Activated T-helper 2 cell treated with anti-CD3 and anti-CD28 coated beads, Interferon-gamma antibody, Interleukin-2, Interleukin-4, amounts not matched to agents 10 μg/mL and 5 μg/mL and 100 μg/mL, durations not matched to agents 14 hours and 24 hours and 36 hours (primary cell): ENCODE measurements at regions of chr10 and their contacts with region 1.

Region 1: GRCh38 chr10:100508691-100509150 is 10.9 kb downstream of the SEC31B start:
- DNase-seq: peak; percentile 58
- H3K4me3 Mint-ChIP-seq: peak overlapping the region; percentile 70
- H3K27ac Mint-ChIP-seq: peak overlapping the region; percentile 87
- H3K4me1 Mint-ChIP-seq: peaks cover 85% of the 10 kb centered on the region
- H3K27me3 Mint-ChIP-seq: no peaks in the 10 kb centered on the region

Region 2: DNA sequence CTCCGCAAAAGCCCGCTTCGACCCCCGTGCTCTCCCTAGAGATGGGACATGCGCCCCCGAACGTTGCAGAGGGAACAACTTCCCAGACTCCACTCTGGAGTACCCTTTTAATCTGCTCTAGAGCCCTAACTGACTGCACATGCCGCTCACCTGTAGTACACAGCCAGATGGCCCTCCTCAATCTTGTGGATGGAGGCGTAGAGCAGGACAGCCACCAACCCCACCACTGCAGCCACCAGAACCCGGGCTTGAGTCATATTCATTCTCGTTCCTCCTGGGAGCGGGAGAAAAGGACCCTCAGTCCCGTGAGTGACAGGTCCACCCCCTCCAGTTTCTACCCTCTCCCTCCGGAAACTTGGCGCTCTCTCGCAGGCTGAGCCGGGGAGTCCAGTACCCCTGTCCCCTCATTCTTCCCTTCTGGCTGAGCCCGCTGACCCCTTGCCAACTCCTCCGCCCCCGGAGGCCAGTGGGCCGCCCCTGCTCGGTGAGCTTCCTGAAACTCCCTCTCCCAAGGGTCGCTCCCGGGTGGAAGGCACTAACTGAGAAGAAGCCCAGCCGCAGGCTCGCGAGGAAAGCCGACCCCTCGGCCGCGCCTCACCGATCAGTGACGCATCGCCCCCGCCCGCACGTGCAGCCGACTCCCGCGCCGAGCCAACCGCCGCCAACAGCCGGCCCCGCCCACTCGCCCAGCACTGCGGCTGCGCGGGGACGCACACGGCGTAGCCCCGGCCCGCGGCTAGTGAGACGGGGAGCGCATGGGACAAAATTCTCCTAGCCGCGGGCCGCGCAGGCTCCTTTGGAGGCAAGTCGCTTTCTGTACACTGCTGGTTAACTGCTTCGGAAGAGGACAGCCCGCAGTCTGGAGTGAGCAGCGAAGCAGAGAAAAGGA is 323.1 kb before region 1 on chr10 and contains the start of gene ERLIN1:
- intact Hi-C with region 1: loop called (anchors 5 kb)
- DNase-seq: peak; percentile 90
- H3K4me3 Mint-ChIP-seq: peak within 1 kb of the TSS; percentile 99
- H3K27ac Mint-ChIP-seq: peak within 1 kb of the TSS; percentile 94
- H3K4me1 Mint-ChIP-seq: peaks cover 55% of the 10 kb centered on the region
- H3K27me3 Mint-ChIP-seq: no peaks in the 10 kb centered on the region
- total RNA-seq, gene ERLIN1: 18.2 and 19.4 TPM in 2 replicates

Region 3: DNA sequence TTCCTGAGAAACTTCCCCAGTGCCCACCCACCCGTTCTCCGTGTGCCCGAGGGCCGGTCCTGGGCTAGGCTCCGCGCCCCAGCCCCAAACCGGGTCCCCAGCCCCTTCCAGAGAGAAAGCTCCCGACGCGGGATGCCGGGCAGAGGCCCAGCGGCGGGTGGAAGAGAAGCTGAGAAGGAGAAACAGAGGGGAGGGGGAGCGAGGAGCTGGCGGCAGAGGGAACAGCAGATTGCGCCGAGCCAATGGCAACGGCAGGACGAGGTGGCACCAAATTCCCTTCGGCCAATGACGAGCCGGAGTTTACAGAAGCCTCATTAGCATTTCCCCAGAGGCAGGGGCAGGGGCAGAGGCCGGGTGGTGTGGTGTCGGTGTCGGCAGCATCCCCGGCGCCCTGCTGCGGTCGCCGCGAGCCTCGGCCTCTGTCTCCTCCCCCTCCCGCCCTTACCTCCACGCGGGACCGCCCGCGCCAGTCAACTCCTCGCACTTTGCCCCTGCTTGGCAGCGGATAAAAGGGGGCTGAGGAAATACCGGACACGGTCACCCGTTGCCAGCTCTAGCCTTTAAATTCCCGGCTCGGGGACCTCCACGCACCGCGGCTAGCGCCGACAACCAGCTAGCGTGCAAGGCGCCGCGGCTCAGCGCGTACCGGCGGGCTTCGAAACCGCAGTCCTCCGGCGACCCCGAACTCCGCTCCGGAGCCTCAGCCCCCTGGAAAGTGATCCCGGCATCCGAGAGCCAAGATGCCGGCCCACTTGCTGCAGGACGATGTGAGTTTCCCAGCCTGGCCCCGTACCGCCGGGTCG is 161.8 kb before region 1 on chr10 and contains the start of gene SCD:
- intact Hi-C with region 1: loop called (anchors 1 kb)
- DNase-seq: peak; percentile 90
- H3K4me3 Mint-ChIP-seq: peak within 1 kb of the TSS; percentile 100
- H3K27ac Mint-ChIP-seq: peak within 1 kb of the TSS; percentile 92
- H3K4me1 Mint-ChIP-seq: peaks cover 57% of the 10 kb centered on the region
- H3K27me3 Mint-ChIP-seq: no peaks in the 10 kb centered on the region
- total RNA-seq, gene SCD: 273 and 278 TPM in 2 replicates

Region 4: DNA sequence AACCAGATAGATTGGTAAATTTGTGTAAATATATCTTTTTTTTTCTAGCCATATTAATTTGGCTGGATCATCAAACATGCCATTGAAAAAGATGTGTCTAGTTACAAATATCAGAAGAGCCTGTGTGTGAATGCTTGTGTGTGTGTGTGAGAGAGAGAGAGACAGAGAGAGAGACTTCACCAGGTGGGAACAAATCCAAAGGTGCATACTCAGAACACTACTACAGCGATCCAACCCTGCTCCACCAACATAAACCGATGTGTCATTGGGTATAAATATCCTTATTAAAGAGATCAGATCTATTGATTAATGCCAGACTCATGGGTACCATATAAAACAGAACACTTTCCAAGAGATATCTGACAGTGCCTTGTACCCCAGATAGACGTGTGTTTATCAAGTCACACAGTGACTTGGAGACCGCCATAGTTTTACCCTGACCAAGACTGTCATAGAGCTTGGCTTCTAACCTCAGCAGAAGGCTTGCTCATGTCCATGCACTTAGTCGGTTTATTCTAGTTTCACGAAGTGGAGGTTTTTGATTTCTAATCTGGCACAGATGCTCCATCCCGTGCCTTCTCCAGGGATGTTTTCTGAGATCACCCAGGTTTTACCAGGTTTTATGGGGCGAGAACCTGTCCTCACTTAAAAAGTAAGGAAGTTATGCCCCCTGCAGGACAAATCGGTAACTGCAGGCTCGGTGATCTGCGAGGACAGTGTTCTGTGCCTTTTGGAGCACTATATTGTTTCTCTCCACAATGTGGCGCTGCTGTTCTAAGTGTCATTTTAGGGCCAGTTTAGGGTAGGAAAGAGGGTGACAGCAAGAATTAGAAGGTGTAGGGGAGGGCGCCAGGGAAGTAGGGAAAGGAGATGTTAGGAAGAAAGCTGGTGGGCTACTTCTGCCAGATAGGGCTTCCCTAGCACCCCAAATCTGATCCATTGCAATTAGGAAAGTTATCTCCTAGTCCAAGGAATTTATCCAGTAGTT is 75.2 kb before region 1 on chr10:
- intact Hi-C with region 1: loop called (anchors 1 kb)
- DNase-seq: peak; percentile 90
- H3K4me3 Mint-ChIP-seq: no peak overlapping the region
- H3K27ac Mint-ChIP-seq: no peak overlapping the region
- H3K4me1 Mint-ChIP-seq: peaks cover 16% of the 10 kb centered on the region
- H3K27me3 Mint-ChIP-seq: no peaks in the 10 kb centered on the region

Region 5: GRCh38 chr10:100518761-100519241 is 10.1 kb after region 1 on chr10:
- intact Hi-C with region 1: loop called (anchors 1 kb)
- DNase-seq: peak; percentile 47
- H3K4me3 Mint-ChIP-seq: no peak overlapping the region
- H3K27ac Mint-ChIP-seq: no peak overlapping the region
- H3K4me1 Mint-ChIP-seq: peaks cover 41% of the 10 kb centered on the region
- H3K27me3 Mint-ChIP-seq: no peaks in the 10 kb centered on the region

Region 6: GRCh38 chr10:100535715-100536353 is 27.1 kb after region 1 on chr10 and contains the start of gene HIF1AN:
- intact Hi-C with region 1: loop called (anchors 1 kb)
- DNase-seq: peak; percentile 90
- H3K4me3 Mint-ChIP-seq: no peak within 1 kb of the TSS
- H3K27ac Mint-ChIP-seq: peak within 1 kb of the TSS; percentile 12
- H3K4me1 Mint-ChIP-seq: peaks cover 28% of the 10 kb centered on the region
- H3K27me3 Mint-ChIP-seq: no peaks in the 10 kb centered on the region
- total RNA-seq, gene HIF1AN: 46.7 and 47.9 TPM in 2 replicates